GM13977 (cell line): ENCODE measurements at regions of chr9 and their contacts with region 1.

Region 1: GRCh38 chr9:73183917-73184861 is 32.5 kb downstream of the ANXA1 start:
- DNase-seq: peak; percentile 7
- CTCF ChIP-seq: peak; percentile 27

Region 2: GRCh38 chr9:72856972-72857623 is 327.1 kb before region 1 on chr9:
- in situ Hi-C with region 1: loop called (anchors 25 kb)
- DNase-seq: peak; percentile 33
- CTCF ChIP-seq: peak; percentile 54

Region 3: DNA sequence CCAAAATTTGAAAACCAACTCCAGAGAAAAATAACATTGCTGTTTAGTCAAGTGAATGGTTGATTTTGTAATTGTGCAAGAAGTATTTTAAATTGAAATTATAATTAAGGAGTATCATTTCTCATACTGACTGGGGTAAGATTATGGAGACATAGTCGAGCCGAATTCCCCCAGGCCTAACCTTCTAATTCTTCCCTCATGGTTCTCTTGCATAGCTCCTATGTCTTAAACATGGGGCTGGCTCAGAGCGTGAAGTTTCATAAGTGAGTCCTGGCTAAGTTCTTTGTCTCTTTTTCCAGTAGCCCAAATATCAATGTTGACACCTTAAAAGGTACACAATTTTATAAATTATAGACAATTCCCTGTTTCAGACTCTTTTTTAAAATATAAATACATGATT is 79.3 kb before region 1 on chr9:
- in situ Hi-C with region 1: loop called (anchors 5 kb)
- DNase-seq: no peak
- CTCF ChIP-seq: no peak

Region 4: GRCh38 chr9:74570879-74571512 is 1386.8 kb after region 1 on chr9:
- in situ Hi-C with region 1: loop called (anchors 25 kb)
- DNase-seq: peak; percentile 11
- CTCF ChIP-seq: peak; percentile 76